K562 (cell line): ENCODE measurements at regions of chr1 and their contacts with region 1.

Region 1: DNA sequence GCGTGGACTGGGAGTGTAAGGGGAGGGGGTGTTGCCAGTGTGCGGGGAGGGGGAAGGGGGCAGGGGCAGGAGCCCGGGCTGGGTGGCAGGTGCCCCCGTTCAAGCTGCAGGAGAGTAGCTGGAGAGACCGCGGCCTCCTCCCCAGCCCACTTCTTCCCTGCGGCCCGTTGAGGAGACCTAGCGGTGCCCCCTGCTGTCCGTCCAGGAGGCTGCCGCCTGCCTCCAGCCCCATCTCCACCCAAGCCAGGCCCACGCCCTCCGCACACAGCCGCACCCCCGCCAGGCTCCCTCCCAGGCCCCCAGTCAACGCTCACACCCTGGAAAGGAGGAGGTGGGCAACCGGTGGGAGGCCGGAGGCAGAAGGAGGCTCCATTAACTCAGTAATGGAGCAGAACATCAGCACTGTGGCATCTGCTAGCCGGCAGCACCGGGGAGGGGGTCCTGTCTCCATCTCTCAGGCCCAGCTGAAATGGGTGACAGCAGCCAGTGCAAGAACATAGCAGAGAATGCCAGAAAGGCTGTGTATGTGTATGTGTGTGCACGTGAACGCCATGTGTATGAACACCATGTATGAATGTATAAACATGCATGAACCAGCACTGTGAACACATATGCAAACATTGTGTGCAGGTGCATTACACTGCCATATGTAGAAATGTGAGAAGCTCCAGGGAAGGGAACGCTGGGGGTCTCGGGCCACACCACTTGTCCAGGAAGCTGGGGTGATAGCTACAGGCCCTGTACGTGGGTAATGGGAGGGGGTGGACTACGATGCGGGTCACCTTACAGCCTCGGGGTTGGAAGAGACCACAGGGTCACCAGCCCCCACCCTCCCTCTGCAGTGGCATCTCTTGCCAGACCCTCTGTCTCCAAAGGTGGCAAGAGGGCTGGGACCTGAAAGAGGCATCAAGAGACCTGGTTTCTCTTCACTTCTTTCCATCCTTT is 84.6 kb downstream of the SYT2 start:
- DNase-seq: peak; percentile 85 to 88 (median 87)
- ATAC-seq: peak; percentile 97
- H3K4me3 ChIP-seq: no peak overlapping the region
- H3K27ac ChIP-seq: no peak overlapping the region
- H3K4me1 ChIP-seq: peaks cover 0 to 16% of the 10 kb centered on the region in 2 experiments; a peak in 3 of 5 replicates
- H3K27me3 ChIP-seq: peaks cover 7 to 35% of the 10 kb centered on the region in 2 experiments; a peak in 4 of 5 replicates
- CTCF ChIP-seq: peak; percentile 67 to 88 (median 81)
- EP300 ChIP-seq: no peak
- POLR2A ChIP-seq: no peak
- RAD21 ChIP-seq: peak; percentile 63 to 79

Region 2: DNA sequence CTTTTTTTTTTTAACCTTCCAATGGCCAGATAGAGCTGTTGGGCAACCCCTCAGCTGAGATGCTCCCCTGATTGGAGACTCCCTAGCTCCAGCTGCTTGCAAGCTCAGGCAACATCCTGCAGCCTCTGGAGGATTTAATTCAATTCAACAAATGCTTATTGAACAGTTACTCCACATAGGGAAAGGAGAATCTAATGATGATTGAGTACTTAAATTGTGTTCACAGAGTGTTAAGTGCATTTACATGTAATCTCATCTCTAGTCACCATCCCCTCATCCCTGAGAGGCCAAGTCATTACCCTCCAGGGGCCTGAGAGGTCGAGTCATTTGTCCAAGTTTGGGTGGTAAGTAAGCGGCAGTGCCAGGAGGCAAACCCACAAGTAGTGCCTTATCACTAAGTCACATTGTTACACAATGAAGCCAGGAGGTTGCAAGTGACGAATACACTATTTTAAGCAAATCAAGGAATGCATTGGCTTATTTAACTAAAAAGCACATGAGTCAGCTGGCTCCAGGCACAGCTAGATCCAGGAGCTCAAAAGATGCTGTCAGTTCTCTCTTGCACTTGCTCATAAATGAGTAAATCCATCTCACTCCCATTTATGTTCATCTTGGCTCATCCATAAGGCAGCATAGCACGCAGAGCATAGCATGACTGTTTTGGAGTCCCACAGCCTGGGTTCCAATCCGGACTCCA is 932.5 kb after region 1 on chr1:
- CTCF ChIA-PET with region 1: no interaction called
- POLR2A ChIA-PET with region 1: no interaction called
- in situ Hi-C with region 1: loop called (anchors 10 kb)
- intact Hi-C with region 1: no loop called
- DNase-seq: no peak
- ATAC-seq: no peak
- H3K4me3 ChIP-seq: no peak overlapping the region
- H3K27ac ChIP-seq: no peak overlapping the region
- H3K4me1 ChIP-seq: no peaks in the 10 kb centered on the region
- H3K27me3 ChIP-seq: peaks cover 38 to 64% of the 10 kb centered on the region in 2 experiments
- CTCF ChIP-seq: no peak
- EP300 ChIP-seq: no peak
- POLR2A ChIP-seq: no peak
- RAD21 ChIP-seq: no peak